Aorta (tissue), 5 donors: ENCODE measurements at regions of chr9 and their contacts with region 1.

Region 1: DNA sequence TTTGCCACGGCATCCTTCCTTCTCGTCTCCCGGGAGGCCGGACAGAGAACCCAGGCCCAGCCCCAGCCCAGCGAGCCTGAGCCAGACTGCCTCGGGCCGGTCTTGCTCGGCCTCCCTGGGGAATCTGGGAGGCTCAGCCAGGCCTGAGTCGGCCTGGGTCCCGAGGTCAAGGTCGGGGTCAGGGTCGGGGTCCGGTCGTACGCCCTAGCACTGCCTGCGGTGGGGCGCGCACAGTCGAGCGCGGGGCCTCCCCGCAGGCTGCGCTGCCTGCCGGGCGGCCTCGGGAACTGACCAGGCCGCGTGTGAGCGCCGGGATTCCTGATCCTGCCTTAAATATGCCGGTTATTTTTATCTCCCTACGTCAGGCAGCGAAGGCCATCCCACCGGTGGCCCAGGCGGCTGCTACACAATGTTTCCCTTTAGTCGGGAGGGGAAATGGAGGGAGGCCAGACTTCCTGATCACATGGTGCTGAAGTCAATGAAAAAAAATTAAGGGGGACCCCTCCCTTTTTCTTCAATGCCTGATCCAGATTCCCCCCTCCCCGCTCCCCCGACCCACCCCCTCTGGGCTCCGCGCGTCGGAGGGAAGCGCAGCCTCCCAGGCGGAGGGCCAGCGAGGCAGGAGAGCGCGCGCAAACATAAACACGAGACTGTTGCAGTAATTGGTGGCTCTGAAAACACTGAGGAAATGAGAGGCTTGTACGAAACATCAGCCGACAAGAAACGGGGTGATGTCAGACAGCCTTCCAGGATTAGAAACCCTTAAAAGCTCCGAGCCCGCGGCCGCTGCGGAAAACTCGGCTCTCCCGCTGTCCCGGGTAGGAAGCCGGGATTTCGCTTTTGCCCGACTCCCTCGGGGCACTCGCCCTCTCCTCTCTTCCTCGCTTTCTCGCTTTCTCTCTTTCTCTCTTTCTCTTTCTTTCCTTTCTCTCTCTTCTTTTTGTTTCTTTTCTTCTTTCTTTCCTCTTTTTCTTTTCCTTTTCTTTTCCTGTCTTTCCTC is 148.2 kb upstream of the KLF4 start:
- DNase-seq: peak; percentile 95 to 96
- ATAC-seq: peak; percentile 95
- H3K4me3 ChIP-seq: peak overlapping the region; percentile 6 to 47
- H3K27ac ChIP-seq: peak overlapping the region; percentile 95 to 98
- H3K4me1 ChIP-seq: no peaks in the 10 kb centered on the region
- H3K27me3 ChIP-seq: no peaks in the 10 kb centered on the region

Region 2: GRCh38 chr9:107584186-107584585 is 53.5 kb before region 1 on chr9:
- intact Hi-C with region 1: no loop called
- DNase-seq: no peak
- ATAC-seq: no peak
- H3K4me3 ChIP-seq: no peak overlapping the region
- H3K27ac ChIP-seq: no peak overlapping the region
- H3K4me1 ChIP-seq: no peaks in the 10 kb centered on the region
- H3K27me3 ChIP-seq: no peaks in the 10 kb centered on the region

Region 3: DNA sequence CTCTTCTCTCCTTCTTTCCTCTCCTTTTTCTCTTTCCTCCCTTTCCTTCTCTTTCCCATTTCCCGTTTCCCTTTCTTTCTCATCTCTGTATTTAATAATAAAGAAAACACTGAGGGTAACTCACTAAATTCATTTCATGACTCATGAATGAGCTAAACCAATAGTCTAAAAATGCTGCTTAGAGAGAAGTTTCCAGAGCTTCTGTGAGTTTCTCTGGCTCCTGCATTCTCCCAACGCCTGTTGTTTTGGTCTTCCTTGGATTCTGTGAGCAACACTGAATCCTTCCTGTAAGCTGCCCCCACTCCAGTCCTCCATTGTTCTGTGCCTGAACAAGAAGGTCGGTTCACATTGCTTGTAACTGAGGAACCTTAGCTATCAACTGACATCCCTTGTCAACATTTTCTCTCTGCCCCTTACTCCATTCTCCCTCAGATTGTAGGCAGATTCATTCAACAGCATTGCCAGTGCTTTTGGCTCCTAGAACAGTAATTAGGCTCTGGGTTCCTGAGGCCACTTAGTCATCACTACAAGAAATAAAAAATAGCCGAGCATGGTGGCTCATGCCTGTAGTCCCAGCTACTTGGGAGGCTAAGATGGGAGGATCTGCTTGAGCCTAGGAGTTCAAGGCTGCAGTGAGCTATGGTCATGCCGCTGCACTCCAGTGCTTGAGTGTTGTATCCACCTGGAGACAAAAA is 89.5 kb after region 1 on chr9:
- intact Hi-C with region 1: loop called (anchors 5 kb)
- DNase-seq: no peak
- ATAC-seq: no peak
- H3K4me3 ChIP-seq: no peak overlapping the region
- H3K27ac ChIP-seq: peak overlapping the region; percentile 73 to 90
- H3K4me1 ChIP-seq: peaks cover 2 to 9% of the 10 kb centered on the region in 2 donors
- H3K27me3 ChIP-seq: no peaks in the 10 kb centered on the region

Region 4: GRCh38 chr9:107732781-107733522 is 95.2 kb after region 1 on chr9:
- intact Hi-C with region 1: loop called (anchors 5 kb)
- DNase-seq: peak in 1 of 2 donors; percentile 82
- ATAC-seq: peak; percentile 56
- H3K4me3 ChIP-seq: peak overlapping the region in 1 of 2 donors; percentile 37
- H3K27ac ChIP-seq: peak overlapping the region; percentile 88 to 95
- H3K4me1 ChIP-seq: peaks cover 0 to under 1% of the 10 kb centered on the region in 2 donors
- H3K27me3 ChIP-seq: no peaks in the 10 kb centered on the region

Region 5: DNA sequence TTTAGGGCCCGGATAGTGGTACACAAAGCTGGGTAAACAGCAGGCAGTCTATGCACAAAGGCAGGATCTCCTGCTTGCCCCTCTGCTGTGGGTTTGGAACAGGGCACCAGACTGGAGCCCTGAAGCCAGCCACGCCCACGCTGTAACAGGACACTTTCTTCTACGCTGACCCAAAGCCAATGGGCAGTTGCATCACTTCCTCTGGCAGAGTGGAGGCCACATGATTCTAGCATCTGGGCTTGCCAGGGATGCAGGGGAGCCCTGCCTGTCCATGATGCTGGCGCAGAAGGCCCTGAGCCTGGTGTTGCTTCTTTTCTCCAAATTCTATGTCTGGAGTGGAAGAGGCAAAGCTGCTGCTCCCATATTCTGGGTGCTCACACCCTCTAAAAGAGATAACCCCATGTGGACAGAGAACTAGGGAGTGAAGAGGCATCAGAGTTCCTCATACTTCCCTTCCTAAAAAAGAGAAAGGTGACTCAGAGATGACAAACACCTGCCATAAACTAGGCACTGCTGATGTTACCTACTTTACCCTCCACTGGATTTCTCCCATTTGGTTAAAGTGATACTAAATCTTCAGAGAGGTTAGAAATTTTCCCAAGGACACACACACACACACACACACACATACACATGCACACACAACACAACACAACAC is 112.2 kb after region 1 on chr9:
- intact Hi-C with region 1: loop called (anchors 2 to 5 kb)
- DNase-seq: peak; percentile 93 to 95
- ATAC-seq: peak; percentile 94
- H3K4me3 ChIP-seq: no peak overlapping the region
- H3K27ac ChIP-seq: peak overlapping the region; percentile 96 to 98
- H3K4me1 ChIP-seq: peaks cover 4 to 8% of the 10 kb centered on the region in 2 donors
- H3K27me3 ChIP-seq: no peaks in the 10 kb centered on the region

Region 6: DNA sequence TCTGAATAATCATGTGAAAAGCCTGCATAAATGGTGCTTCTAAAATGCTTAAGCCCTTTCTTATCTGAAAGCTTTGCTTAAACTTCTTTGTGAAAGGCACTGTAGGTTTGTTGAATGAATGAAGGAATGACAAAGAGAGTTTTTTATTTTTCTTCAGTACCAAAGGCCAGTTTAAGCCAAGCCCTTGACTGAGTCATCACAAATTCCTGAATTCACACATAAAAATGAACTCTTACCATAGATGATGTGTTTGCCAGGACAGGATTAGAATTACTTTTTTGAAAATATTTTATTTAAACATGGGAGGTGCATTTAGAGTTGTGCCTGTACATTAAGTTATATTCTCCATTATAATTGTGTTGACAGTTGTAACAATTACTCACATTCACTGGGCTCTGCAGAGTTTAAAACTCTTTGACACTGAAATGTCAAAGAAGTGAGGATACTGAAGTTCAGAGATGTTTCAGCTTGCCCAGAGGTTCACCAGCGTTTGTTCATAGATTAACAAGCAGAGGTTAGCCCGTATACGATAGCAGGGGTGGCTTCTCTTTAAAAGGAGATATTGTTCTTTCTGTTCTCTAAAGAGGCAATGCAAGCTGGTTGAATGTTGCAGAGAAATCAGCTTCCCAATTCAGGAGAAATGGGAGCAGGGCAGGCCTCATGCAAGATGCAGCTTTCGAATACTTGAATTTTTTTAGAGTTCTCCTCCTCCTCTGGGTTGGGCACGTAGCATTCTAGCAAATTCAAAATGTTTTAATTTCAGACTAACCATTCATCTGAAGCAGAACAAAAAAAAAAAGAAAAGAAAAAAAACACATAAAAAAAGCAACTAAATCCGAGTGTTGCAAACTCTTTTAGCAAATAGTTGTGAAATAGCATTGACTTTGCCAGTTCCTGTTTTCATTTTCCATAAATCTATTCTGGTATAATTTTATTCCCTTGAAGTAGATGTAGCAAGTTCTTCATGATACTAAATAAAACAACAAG is 210.6 kb after region 1 on chr9:
- intact Hi-C with region 1: loop called in 1 of 2 experiments (anchors 10 kb)
- DNase-seq: no peak
- ATAC-seq: peak; percentile 33
- H3K4me3 ChIP-seq: no peak overlapping the region
- H3K27ac ChIP-seq: peak overlapping the region in 1 of 2 donors; percentile 58
- H3K4me1 ChIP-seq: peaks cover 0 to 2% of the 10 kb centered on the region in 2 donors
- H3K27me3 ChIP-seq: no peaks in the 10 kb centered on the region